Heart left ventricle (tissue), 16 donors: ENCODE measurements at regions of chr21 and their contacts with region 1.

Region 1: GRCh38 chr21:37675202-37675801 is 241.0 kb downstream of the KCNJ6 start:
- DNase-seq: peak; percentile 38 to 80 (median 60)
- ATAC-seq: peak in 3 of 4 donors; percentile 51 to 76 (median 72)
- H3K4me3 ChIP-seq: peak overlapping the region in 4 of 12 donors; percentile 17 to 26 (median 20)
- H3K27ac ChIP-seq: no peak overlapping the region
- H3K4me1 ChIP-seq: peaks cover 0 to 9% (median 4%) of the 10 kb centered on the region in 12 donors
- H3K27me3 ChIP-seq: peaks cover 0 to 18% (median 3%) of the 10 kb centered on the region in 9 donors
- CTCF ChIP-seq: peak; percentile 86 to 99 (median 94)
- POLR2A ChIP-seq: no peak

Region 2: GRCh38 chr21:37606549-37606948 is 68.8 kb before region 1 on chr21:
- intact Hi-C with region 1: loop called in 1 of 10 experiments (anchors 10 kb)
- DNase-seq: no peak
- ATAC-seq: no peak
- H3K4me3 ChIP-seq: no peak overlapping the region
- H3K27ac ChIP-seq: no peak overlapping the region
- H3K4me1 ChIP-seq: no peaks in the 10 kb centered on the region
- H3K27me3 ChIP-seq: no peaks in the 10 kb centered on the region
- CTCF ChIP-seq: no peak
- POLR2A ChIP-seq: no peak